Heart right ventricle (tissue), 16 donors: ENCODE measurements at regions of chr2 and their contacts with region 1.

Region 1: DNA sequence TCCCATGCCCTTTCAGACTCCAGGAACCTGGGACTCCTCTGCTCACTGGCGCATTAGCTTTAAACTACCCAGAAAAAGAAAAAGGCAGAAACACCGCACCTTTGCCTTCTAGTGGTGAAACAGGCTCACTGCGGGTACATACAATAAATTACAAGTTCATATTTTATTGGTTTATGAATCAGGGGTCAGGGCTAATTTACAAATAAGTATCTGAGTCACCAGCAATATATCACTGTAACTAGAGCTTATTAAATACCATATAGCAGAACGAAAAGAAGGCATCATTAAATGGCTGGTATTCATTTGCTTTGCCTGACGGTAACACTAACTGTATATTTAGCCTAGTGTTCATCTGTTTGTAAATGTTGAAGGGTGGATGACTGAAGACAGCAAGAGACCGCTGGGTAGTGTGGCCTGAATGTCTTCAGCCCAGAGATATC is 26.9 kb upstream of the DTNB start:
- DNase-seq: no peak
- ATAC-seq: no peak
- H3K4me3 ChIP-seq: no peak overlapping the region
- H3K27ac ChIP-seq: no peak overlapping the region
- H3K4me1 ChIP-seq: peaks cover 0 to 7% (median 0%) of the 10 kb centered on the region in 9 donors
- H3K27me3 ChIP-seq: peaks cover 0 to 15% (median 0%) of the 10 kb centered on the region in 7 donors
- CTCF ChIP-seq: peak; percentile 45 to 73 (median 66)

Region 2: GRCh38 chr2:25597881-25598280 is 102.4 kb before region 1 on chr2:
- intact Hi-C with region 1: loop called in 1 of 10 experiments (anchors 2 kb)
- DNase-seq: no peak
- ATAC-seq: no peak
- H3K4me3 ChIP-seq: no peak overlapping the region
- H3K27ac ChIP-seq: peak overlapping the region in 1 of 10 donors; percentile 65
- H3K4me1 ChIP-seq: peaks cover 0 to 18% (median 0%) of the 10 kb centered on the region in 9 donors
- H3K27me3 ChIP-seq: no peaks in the 10 kb centered on the region
- CTCF ChIP-seq: no peak

Region 3: DNA sequence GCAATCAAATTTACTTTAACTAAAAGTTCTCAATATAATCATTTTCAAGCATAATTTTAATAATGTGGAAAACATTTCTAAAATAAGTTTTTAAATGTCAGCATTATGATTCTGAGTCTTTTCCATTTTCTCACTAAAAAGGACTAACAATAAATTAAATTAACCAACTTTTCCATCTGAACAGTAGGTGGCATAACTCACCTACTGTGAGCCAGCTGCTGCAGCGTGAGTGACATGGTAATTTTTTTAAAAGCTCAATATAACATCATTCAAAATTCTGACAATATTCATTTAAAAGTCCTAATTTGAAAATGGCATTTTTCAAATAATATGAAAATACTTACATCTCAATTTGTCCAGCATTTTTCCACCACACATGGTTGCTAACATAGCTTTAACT is 93.3 kb before region 1 on chr2:
- intact Hi-C with region 1: loop called in 1 of 10 experiments (anchors 5 kb)
- DNase-seq: no peak
- ATAC-seq: peak in 1 of 8 donors; percentile 49
- H3K4me3 ChIP-seq: no peak overlapping the region
- H3K27ac ChIP-seq: no peak overlapping the region
- H3K4me1 ChIP-seq: no peaks in the 10 kb centered on the region
- H3K27me3 ChIP-seq: no peaks in the 10 kb centered on the region
- CTCF ChIP-seq: peak; percentile 22 to 80 (median 69)

Region 4: DNA sequence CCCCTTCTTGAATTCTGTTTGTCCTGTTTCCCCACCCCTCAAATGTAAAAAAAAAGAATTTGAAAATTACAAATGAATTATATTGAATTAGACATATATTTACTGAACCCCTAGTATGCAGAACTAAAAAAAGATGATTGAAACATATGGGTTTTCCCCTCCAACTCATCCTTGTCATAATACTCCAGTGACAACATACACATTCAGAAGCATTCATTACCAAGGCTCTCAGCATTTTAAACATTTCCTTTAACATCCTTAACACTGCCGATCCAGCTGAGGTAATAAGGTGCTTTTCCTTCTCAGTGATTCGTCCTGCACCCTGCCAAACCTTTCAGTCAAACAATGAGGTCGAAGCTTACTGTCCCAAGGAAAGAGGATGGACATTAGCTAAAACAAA is 26.3 kb after region 1 on chr2:
- intact Hi-C with region 1: no loop called
- DNase-seq: no peak
- ATAC-seq: no peak
- H3K4me3 ChIP-seq: no peak overlapping the region
- H3K27ac ChIP-seq: no peak overlapping the region
- H3K4me1 ChIP-seq: no peaks in the 10 kb centered on the region
- H3K27me3 ChIP-seq: no peaks in the 10 kb centered on the region
- CTCF ChIP-seq: no peak